Common myeloid progenitor, CD34-positive (primary cell): ENCODE measurements at regions of chr3 and their contacts with region 1.

Region 1: DNA sequence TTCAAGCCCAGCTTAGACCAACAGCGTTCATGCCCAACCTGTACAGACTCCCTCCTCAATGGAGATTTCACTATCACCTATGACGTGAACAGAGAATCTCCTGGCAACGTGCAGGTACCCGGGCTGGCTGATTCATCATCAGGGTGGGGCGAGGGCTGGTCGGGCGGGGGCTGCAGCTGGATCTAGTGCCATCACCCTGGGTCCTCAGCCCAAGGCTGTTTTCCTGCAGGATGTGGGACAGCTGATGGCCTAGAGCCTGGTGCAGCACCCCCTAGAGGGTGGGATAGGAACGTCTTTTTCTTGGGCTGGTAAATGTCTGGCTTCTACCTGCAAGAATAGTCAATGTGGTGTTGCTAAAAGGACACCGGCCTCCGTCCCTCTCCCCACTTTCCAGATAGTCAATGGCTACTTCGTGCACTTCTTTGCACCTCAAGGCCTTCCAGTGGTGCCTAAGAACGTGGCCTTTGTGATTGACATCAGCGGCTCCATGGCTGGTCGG is 4.4 kb downstream of the ITIH3 start:
- DNase-seq: peak in 1 of 3 donors; percentile 25
- H3K4me3 ChIP-seq: no peak overlapping the region
- H3K27ac ChIP-seq: no peak overlapping the region
- H3K4me1 ChIP-seq: no peaks in the 10 kb centered on the region
- H3K27me3 ChIP-seq: no peaks in the 10 kb centered on the region

Region 2: GRCh38 chr3:52696830-52697621 is 102.0 kb before region 1 on chr3:
- CTCF ChIA-PET with region 1: no interaction called
- POLR2A ChIA-PET with region 1: no interaction called
- DNase-seq: no peak
- H3K4me3 ChIP-seq: no peak overlapping the region
- H3K27ac ChIP-seq: no peak overlapping the region
- H3K4me1 ChIP-seq: no peaks in the 10 kb centered on the region
- H3K27me3 ChIP-seq: no peaks in the 10 kb centered on the region

Region 3: GRCh38 chr3:52730681-52731080 is 68.3 kb before region 1 on chr3:
- CTCF ChIA-PET with region 1: no interaction called
- POLR2A ChIA-PET with region 1: no interaction called
- DNase-seq: no peak
- H3K4me3 ChIP-seq: no peak overlapping the region
- H3K27ac ChIP-seq: no peak overlapping the region
- H3K4me1 ChIP-seq: no peaks in the 10 kb centered on the region
- H3K27me3 ChIP-seq: no peaks in the 10 kb centered on the region

Region 4: GRCh38 chr3:52781741-52782140 is 17.3 kb before region 1 on chr3:
- CTCF ChIA-PET with region 1: interaction called, 16 read pairs
- POLR2A ChIA-PET with region 1: no interaction called
- DNase-seq: peak in 1 of 3 donors; percentile 19
- H3K4me3 ChIP-seq: no peak overlapping the region
- H3K27ac ChIP-seq: no peak overlapping the region
- H3K4me1 ChIP-seq: peaks cover 0 to 19% (median 13%) of the 10 kb centered on the region in 4 experiments
- H3K27me3 ChIP-seq: peaks cover 0 to 5% (median 0%) of the 10 kb centered on the region in 5 experiments